Activated CD4-positive, alpha-beta T cell treated with anti-CD3 and anti-CD28 coated beads for 36 hours (primary cell): ENCODE measurements at regions of chr12 and their contacts with region 1.

Region 1: DNA sequence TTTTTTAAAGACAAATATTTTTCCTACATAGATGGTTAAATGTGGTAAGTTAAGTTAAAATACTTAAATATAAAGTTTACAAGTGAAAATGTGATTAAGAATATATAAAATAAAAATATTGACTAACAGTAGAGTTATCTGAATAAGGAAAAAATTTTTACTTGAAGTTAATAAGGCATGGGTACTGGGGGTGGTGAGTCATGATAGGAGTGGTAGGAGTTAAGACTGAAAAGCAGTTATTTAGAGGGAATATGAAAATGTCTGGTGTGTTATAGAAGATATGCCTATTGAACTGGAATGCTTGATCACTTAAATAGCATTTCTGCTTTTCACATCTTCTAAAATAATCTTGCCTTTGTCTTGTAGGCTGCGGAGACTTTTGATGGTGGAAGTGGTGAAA is 68.7 kb downstream of the CCDC91 start:
- DNase-seq: no peak
- ATAC-seq: no peak
- H3K4me3 Mint-ChIP-seq: no peak overlapping the region
- H3K27ac Mint-ChIP-seq: no peak overlapping the region
- H3K4me1 Mint-ChIP-seq: peaks cover 14% of the 10 kb centered on the region
- H3K27me3 Mint-ChIP-seq: no peaks in the 10 kb centered on the region

Region 2: DNA sequence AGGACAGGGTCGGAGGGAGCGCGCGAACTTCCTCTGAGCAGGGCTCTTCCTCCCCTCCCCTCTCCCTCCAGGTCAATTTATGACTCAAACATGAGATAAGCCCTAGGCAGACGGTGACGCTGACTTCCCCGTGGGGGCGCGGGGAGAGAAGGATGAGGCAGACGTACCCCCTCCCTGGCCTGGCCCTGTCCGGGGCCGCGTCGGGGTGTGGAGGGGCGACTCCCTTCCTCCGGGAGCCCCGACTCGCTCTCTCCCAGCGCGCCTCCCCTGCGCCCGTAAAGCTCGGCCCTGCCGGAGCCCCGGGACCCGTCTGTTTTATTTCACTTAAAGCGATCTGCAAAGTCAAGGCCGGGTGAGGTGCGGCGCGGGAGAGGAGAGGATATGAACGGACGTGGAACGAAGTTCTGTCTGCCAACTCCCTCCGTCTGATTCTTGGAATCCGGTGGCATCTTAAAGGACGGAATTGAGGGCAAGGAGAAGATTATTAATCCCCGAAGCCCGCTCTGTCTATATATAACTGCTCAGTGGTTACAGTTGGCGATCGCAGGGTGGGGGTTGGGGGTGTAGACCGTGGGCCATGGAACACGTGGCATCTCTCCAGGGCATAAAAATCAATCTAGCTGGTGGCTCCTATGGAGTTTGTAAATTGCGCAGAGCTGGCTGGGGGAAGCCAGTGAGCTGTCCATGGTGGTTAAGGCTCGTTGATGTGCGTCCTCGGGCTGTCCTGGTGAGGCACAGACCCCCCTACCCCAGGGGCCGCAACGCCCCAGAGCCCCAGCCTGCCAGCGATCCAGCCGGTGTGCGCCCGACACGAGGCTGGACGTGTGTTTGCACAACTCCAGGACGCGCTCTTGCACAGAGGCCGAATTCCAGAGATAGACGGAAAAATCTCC is 283.5 kb before region 1 on chr12:
- CTCF ChIA-PET with region 1: no interaction called
- POLR2A ChIA-PET with region 1: no interaction called
- intact Hi-C with region 1: loop called in 1 of 2 experiments (anchors 5 kb)
- DNase-seq: peak; percentile 52
- ATAC-seq: peak; percentile 74
- H3K4me3 Mint-ChIP-seq: peak overlapping the region; percentile 52
- H3K27ac Mint-ChIP-seq: no peak overlapping the region
- H3K4me1 Mint-ChIP-seq: peaks cover 15% of the 10 kb centered on the region
- H3K27me3 Mint-ChIP-seq: peaks cover 80% of the 10 kb centered on the region

Region 3: GRCh38 chr12:28331130-28331529 is 72.1 kb after region 1 on chr12:
- CTCF ChIA-PET with region 1: no interaction called
- POLR2A ChIA-PET with region 1: no interaction called
- intact Hi-C with region 1: no loop called
- DNase-seq: no peak
- ATAC-seq: no peak
- H3K4me3 Mint-ChIP-seq: no peak overlapping the region
- H3K27ac Mint-ChIP-seq: no peak overlapping the region
- H3K4me1 Mint-ChIP-seq: no peaks in the 10 kb centered on the region
- H3K27me3 Mint-ChIP-seq: no peaks in the 10 kb centered on the region

Region 4: DNA sequence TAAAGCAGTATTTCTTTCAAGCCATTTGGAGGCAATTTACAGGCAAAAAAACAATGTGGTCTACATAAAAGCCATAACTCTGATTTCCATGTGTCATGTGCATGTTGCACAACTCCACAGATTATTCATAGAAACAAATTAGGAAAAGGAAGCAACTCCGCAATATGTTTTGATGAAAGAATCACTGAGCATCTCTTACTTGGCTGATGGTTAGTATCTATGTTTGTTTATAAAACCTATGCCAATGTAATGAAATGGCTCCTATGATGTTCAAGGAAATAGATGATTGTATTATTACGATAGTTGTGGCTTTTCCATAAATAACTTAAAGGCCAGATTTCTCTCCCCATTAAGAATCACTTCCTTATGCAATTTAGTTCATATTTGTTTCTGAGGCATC is 304.9 kb after region 1 on chr12:
- CTCF ChIA-PET with region 1: no interaction called
- POLR2A ChIA-PET with region 1: no interaction called
- intact Hi-C with region 1: no loop called
- DNase-seq: no peak
- ATAC-seq: no peak
- H3K4me3 Mint-ChIP-seq: no peak overlapping the region
- H3K27ac Mint-ChIP-seq: no peak overlapping the region
- H3K4me1 Mint-ChIP-seq: no peaks in the 10 kb centered on the region
- H3K27me3 Mint-ChIP-seq: no peaks in the 10 kb centered on the region